Dendritic cell treated with granulocyte-macrophage colony-stimulating factor and Interleukin-4, amounts not matched to agents 40 ng/mL and 50 ng/mL, for 4 days (primary cell): ENCODE measurements at regions of chr9 and their contacts with region 1.

Region 1: GRCh38 chr9:105157130-105157583 is 87.3 kb upstream of the SLC44A1 start:
- H3K4me3 Mint-ChIP-seq: no peak overlapping the region
- H3K27ac Mint-ChIP-seq: no peak overlapping the region
- H3K4me1 Mint-ChIP-seq: peaks cover 29% of the 10 kb centered on the region
- H3K27me3 Mint-ChIP-seq: no peaks in the 10 kb centered on the region

Region 2: DNA sequence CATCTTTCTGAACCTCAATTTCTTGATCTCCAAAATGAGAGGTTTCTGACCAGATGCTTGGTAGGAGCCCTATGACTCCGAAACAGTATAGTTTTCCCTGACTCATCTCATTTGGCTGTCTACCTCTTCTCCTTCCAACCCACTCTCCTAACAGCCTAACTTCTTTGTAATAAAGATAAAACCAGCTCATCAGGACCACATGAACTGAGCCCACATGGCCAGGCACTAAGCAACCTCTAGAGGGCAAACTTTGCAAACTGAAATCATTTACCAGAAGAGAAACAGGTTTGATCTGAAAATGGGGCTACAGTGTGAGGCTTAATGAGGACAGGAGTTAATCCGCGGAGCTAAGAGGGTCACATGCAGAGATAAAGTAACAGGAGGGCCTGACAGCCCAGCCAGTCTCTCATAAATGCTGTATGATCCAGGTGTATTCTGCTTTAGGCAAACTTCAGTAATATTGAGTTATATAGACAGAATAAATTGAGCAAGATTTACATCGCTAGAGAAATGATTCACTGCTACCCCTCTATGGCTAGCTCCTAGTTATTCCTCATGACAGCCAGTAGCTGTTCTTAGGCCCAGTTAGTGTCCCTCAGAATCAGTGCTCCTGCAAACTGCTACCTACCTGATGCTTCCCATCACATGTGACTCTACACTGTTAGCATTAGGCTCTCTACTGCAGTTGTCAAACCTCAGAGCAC is 293.8 kb before region 1 on chr9:
- intact Hi-C with region 1: loop called (anchors 2 kb)
- H3K4me3 Mint-ChIP-seq: no peak overlapping the region
- H3K27ac Mint-ChIP-seq: no peak overlapping the region
- H3K4me1 Mint-ChIP-seq: peaks cover 83% of the 10 kb centered on the region
- H3K27me3 Mint-ChIP-seq: no peaks in the 10 kb centered on the region

Region 3: GRCh38 chr9:104927912-104928740 is 229.0 kb before region 1 on chr9 and contains the start of gene ABCA1:
- intact Hi-C with region 1: loop called (anchors 1 kb)
- H3K4me3 Mint-ChIP-seq: peak within 1 kb of the TSS; percentile 99
- H3K27ac Mint-ChIP-seq: peak within 1 kb of the TSS; percentile 98
- H3K4me1 Mint-ChIP-seq: peaks cover 27% of the 10 kb centered on the region
- H3K27me3 Mint-ChIP-seq: peaks cover 7% of the 10 kb centered on the region

Region 4: DNA sequence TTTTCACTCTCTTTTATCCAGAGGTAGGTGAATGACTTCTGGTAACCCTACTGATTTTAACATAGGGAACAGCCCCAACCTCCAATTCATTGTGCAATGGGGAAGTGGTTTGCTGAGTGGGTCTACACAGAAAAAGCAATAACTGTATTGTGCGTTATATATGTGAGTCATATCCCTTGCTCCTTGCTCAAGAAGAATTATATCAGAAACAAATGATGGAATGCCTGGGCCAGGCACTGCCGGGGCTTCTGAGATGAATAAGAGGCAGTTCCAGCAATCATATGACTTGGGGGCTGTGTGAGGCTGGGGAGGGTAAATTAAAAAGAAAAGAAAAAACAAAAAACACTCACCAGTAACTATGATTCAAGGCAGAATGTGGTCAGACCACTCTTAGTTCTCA is 150.0 kb before region 1 on chr9:
- intact Hi-C with region 1: loop called (anchors 5 kb)
- H3K4me3 Mint-ChIP-seq: peak overlapping the region; percentile 63
- H3K27ac Mint-ChIP-seq: peak overlapping the region; percentile 88
- H3K4me1 Mint-ChIP-seq: peaks cover 43% of the 10 kb centered on the region
- H3K27me3 Mint-ChIP-seq: peaks cover 12% of the 10 kb centered on the region

Region 5: DNA sequence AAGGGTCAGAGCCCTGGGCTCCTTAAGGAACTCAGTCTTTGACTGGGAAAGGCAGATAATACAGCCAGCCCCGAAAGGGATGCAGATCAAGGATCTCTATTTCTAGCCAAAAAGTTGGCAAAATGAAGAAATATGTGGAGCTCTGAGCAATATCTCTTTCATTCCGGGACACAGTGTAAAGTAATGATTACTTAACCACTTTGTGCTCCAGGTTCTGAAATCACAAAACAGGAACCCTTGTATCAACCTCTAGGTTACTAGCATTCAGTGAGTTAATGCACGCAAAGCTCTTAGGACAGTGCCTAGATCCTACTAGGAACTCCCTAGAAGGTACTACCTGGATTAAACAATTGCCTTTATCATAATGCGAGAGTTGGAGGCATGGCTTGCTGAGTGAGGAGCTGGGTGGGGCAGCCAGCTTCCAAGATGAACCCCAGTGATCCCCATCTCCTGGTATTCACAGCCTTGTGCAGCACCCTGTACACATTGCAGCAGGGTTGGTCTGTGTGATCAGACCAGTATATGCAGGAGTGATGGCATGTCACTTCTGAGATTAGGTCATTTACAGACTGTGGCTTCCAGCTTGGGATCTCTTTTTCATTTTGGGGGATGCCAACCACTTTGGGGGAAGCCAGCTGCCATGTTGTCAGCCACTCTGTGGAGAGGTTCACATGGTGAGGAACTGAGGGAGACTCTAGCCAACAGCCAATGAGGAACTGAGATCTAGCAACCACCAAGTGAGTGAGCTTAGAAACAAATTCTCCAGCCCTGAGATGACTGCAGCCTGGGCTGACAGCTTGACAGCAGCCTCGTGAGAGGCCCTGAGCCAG is 15.8 kb before region 1 on chr9:
- intact Hi-C with region 1: loop called (anchors 1 kb)
- H3K4me3 Mint-ChIP-seq: no peak overlapping the region
- H3K27ac Mint-ChIP-seq: peak overlapping the region; percentile 86
- H3K4me1 Mint-ChIP-seq: peaks cover 41% of the 10 kb centered on the region
- H3K27me3 Mint-ChIP-seq: no peaks in the 10 kb centered on the region

Region 6: GRCh38 chr9:105233873-105234272 is 76.7 kb after region 1 on chr9:
- intact Hi-C with region 1: no loop called
- H3K4me3 Mint-ChIP-seq: no peak overlapping the region
- H3K27ac Mint-ChIP-seq: no peak overlapping the region
- H3K4me1 Mint-ChIP-seq: peaks cover 11% of the 10 kb centered on the region
- H3K27me3 Mint-ChIP-seq: no peaks in the 10 kb centered on the region

Region 7: GRCh38 chr9:105264380-105264779 is 107.2 kb after region 1 on chr9:
- intact Hi-C with region 1: no loop called
- H3K4me3 Mint-ChIP-seq: no peak overlapping the region
- H3K27ac Mint-ChIP-seq: peak overlapping the region; percentile 10
- H3K4me1 Mint-ChIP-seq: peaks cover 62% of the 10 kb centered on the region
- H3K27me3 Mint-ChIP-seq: no peaks in the 10 kb centered on the region

Region 8: GRCh38 chr9:105414947-105415661 is 257.9 kb after region 1 on chr9:
- intact Hi-C with region 1: loop called (anchors 1 kb)
- H3K4me3 Mint-ChIP-seq: no peak overlapping the region
- H3K27ac Mint-ChIP-seq: no peak overlapping the region
- H3K4me1 Mint-ChIP-seq: peaks cover 6% of the 10 kb centered on the region
- H3K27me3 Mint-ChIP-seq: no peaks in the 10 kb centered on the region